ENCODE measurements at regions of chr5 and their contacts with region 1.

Region 1: GRCh38 chr5:55307383-55308253 is at the starts of genes DHX29 and MTREX:
- DNase-seq: peak; percentile 76 to 93 (median 87)
- ATAC-seq: peak; percentile 90
- H3K4me3 ChIP-seq: peak within 1 kb of the TSS; percentile 72 to 76
- H3K4me3 Mint-ChIP-seq: no peak within 1 kb of the TSS
- H3K27ac ChIP-seq: peak within 1 kb of the TSS; percentile 86 to 90
- H3K27ac Mint-ChIP-seq: no peak within 1 kb of the TSS
- H3K4me1 ChIP-seq: peaks cover 41% of the 10 kb centered on the region
- H3K4me1 Mint-ChIP-seq: peaks cover 38% of the 10 kb centered on the region
- H3K27me3 ChIP-seq: no peaks in the 10 kb centered on the region
- H3K27me3 Mint-ChIP-seq: no peaks in the 10 kb centered on the region
- CTCF ChIP-seq: no peak
- total RNA-seq, gene DHX29: 15.4 to 19.9 TPM
- total RNA-seq, gene MTREX: 62.8 to 66.5 TPM

Region 2: DNA sequence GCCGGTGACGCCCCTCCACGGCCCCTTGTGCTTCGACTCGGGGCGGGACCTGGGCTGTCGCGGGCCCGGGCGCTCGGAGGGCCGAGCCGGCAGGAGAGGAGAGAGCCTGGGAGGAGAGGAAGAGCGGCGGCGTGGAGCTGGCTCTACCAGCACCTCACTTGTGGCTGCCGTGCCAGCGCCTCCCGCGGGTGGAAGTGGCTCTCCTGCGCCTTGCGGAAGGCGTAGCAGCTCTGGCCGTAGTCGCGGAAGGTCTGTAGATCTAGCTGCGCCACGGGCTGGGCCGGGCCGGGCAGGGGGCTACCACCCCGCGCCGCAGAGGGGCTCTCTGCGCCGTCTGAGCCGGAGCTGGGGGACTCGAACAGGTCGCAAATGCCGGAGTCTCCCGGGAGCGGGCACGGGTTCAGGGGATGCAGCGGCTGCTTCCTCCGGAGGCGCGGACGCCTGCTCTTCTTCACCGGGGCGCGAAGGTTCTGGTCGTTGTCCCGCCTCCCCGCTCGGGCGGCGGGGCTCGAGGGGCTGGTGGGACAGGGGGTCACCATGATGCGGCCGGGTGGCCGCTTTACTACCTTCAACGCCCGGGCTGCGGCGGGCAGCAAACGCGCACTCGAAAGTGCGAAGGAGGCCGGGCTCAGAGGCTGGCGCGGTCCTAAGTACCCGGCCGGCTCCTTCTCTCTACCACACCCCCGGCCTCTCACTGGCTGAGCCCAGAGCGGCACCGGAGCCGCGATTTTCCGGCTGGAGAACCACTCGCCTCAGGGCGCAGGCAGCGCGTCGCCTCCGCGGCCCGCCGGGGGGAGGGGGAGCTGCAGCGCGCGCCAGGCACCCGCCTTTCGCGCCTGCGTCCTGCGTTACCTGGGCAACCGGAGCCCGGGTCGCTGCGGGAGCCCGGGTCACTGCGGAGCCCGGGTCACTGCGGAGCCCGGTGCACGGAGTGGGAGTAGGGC is 74.4 kb before region 1 on chr5 and contains the start of gene CCNO:
- CTCF ChIA-PET with region 1: no interaction called
- POLR2A ChIA-PET with region 1: interaction called, 4 read pairs
- intact Hi-C with region 1: loop called in 1 of 2 experiments (anchors 2 kb)
- DNase-seq: peak in 6 of 9 experiments; percentile 43 to 73 (median 60)
- ATAC-seq: peak; percentile 66
- H3K4me3 ChIP-seq: peak within 1 kb of the TSS; percentile 52 to 62
- H3K4me3 Mint-ChIP-seq: peak within 1 kb of the TSS; percentile 86
- H3K27ac ChIP-seq: no peak within 1 kb of the TSS
- H3K27ac Mint-ChIP-seq: no peak within 1 kb of the TSS
- H3K4me1 ChIP-seq: peaks cover 31% of the 10 kb centered on the region
- H3K4me1 Mint-ChIP-seq: peaks cover 31% of the 10 kb centered on the region
- H3K27me3 ChIP-seq: peaks cover 44 to 60% of the 10 kb centered on the region in 2 experiments
- H3K27me3 Mint-ChIP-seq: peaks cover 64% of the 10 kb centered on the region
- CTCF ChIP-seq: no peak
- total RNA-seq, gene CCNO: not detected

Region 3: DNA sequence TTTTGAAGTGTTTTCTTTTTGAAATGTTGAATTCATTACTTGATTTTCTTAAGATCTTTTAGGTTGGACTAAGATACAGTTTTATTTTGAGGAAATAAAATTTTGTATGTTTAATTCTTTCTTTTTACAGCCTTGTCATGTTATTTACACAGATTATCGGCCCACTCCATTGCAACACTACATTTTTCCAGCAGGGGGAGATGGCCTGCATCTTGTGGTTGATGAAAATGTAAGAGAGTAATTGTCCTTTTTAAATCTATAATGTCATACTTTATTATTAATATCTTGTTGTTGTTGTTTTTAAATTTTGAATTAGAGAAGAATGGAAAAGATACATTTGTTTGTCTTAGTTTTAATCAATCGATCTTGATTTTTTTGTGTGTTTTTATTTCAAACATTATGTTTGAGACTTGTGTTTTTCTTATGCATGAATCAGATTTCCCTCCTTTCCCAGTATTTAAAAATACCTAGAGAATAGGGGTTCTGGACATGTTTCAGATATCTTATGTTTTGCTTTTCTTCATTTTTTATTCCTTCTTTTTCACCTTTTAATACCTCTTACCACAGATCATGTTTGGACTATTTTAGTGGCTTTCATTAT is 36.9 kb after region 1 on chr5:
- CTCF ChIA-PET with region 1: no interaction called
- POLR2A ChIA-PET with region 1: no interaction called
- intact Hi-C with region 1: loop called in 1 of 2 experiments (anchors 5 kb)
- DNase-seq: peak; percentile 36 to 73 (median 64)
- ATAC-seq: peak; percentile 76
- H3K4me3 ChIP-seq: no peak overlapping the region
- H3K4me3 Mint-ChIP-seq: no peak overlapping the region
- H3K27ac ChIP-seq: no peak overlapping the region
- H3K27ac Mint-ChIP-seq: no peak overlapping the region
- H3K4me1 ChIP-seq: no peaks in the 10 kb centered on the region
- H3K4me1 Mint-ChIP-seq: no peaks in the 10 kb centered on the region
- H3K27me3 ChIP-seq: no peaks in the 10 kb centered on the region
- H3K27me3 Mint-ChIP-seq: no peaks in the 10 kb centered on the region
- CTCF ChIP-seq: peak; percentile 97

Region 4: GRCh38 chr5:55534436-55535198 is 227.0 kb after region 1 on chr5 and contains the start of gene PLPP1:
- CTCF ChIA-PET with region 1: no interaction called
- POLR2A ChIA-PET with region 1: interaction called, 4 read pairs
- intact Hi-C with region 1: loop called (anchors 1 to 2 kb)
- DNase-seq: peak; percentile 57 to 93 (median 79)
- ATAC-seq: peak; percentile 79
- H3K4me3 ChIP-seq: peak within 1 kb of the TSS; percentile 81 to 97
- H3K4me3 Mint-ChIP-seq: peak within 1 kb of the TSS; percentile 93
- H3K27ac ChIP-seq: peak within 1 kb of the TSS; percentile 81 to 87
- H3K27ac Mint-ChIP-seq: peak within 1 kb of the TSS; percentile 92
- H3K4me1 ChIP-seq: peaks cover 25% of the 10 kb centered on the region
- H3K4me1 Mint-ChIP-seq: peaks cover 37% of the 10 kb centered on the region
- H3K27me3 ChIP-seq: no peaks in the 10 kb centered on the region
- H3K27me3 Mint-ChIP-seq: no peaks in the 10 kb centered on the region
- CTCF ChIP-seq: no peak
- total RNA-seq, gene PLPP1: 5.8 to 5.9 TPM

Region 5: GRCh38 chr5:55711968-55712859 is 404.6 kb after region 1 on chr5 and contains the start of gene SLC38A9:
- CTCF ChIA-PET with region 1: no interaction called
- POLR2A ChIA-PET with region 1: no interaction called
- intact Hi-C with region 1: loop called in 1 of 2 experiments (anchors 1 kb)
- DNase-seq: peak; percentile 83 to 94 (median 91)
- ATAC-seq: peak; percentile 99
- H3K4me3 ChIP-seq: peak within 1 kb of the TSS; percentile 92 to 100
- H3K4me3 Mint-ChIP-seq: peak within 1 kb of the TSS; percentile 98
- H3K27ac ChIP-seq: peak within 1 kb of the TSS; percentile 54 to 73
- H3K27ac Mint-ChIP-seq: peak within 1 kb of the TSS; percentile 88
- H3K4me1 ChIP-seq: peaks cover 9% of the 10 kb centered on the region
- H3K4me1 Mint-ChIP-seq: peaks cover 31% of the 10 kb centered on the region
- H3K27me3 ChIP-seq: no peaks in the 10 kb centered on the region
- H3K27me3 Mint-ChIP-seq: peaks cover 3% of the 10 kb centered on the region
- CTCF ChIP-seq: no peak
- total RNA-seq, gene SLC38A9: 6.0 to 6.8 TPM